AG04450 (cell line): ENCODE measurements at regions of chr3 and their contacts with region 1.

Region 1: DNA sequence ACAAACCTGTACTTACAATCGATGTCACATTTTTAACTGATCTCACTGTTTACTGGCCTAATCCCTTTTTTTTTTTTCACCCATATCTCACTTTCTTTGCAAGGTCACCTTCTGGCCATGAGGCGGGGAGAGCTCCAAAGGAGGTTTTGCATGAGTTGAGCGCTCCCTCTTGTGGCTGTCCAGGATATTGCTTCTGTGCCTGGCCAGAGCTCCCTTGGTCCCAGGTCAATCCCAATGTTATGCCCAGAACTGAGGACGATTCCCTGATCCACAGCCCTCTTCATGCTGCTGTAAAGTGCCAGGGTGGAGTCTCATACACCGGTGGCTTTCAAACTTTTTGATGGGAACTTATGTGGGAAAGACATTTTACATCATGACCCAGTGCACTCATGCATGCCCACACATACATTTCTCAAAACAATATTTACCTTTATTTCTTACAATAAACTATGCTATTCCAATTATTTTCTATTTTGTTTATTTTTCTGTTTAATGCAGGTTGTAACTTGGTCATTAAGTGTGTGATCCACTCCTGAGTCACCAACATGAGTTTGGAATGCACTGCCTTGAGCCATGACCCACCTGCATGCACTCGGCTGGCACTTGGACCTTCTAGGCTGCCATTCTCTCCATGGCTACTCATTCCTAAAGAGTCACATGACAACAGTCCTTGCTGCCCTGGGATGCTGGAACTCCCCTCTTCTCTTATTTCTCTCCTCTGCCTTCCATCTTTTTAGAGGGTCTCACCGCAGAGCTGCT is 9.6 kb upstream of the SST start:
- DNase-seq: peak; percentile 24
- H3K4me3 ChIP-seq: no peak overlapping the region
- H3K27ac ChIP-seq: no peak overlapping the region
- H3K27me3 ChIP-seq: peaks cover 29% of the 10 kb centered on the region
- CTCF ChIP-seq: peak; percentile 98

Region 2: DNA sequence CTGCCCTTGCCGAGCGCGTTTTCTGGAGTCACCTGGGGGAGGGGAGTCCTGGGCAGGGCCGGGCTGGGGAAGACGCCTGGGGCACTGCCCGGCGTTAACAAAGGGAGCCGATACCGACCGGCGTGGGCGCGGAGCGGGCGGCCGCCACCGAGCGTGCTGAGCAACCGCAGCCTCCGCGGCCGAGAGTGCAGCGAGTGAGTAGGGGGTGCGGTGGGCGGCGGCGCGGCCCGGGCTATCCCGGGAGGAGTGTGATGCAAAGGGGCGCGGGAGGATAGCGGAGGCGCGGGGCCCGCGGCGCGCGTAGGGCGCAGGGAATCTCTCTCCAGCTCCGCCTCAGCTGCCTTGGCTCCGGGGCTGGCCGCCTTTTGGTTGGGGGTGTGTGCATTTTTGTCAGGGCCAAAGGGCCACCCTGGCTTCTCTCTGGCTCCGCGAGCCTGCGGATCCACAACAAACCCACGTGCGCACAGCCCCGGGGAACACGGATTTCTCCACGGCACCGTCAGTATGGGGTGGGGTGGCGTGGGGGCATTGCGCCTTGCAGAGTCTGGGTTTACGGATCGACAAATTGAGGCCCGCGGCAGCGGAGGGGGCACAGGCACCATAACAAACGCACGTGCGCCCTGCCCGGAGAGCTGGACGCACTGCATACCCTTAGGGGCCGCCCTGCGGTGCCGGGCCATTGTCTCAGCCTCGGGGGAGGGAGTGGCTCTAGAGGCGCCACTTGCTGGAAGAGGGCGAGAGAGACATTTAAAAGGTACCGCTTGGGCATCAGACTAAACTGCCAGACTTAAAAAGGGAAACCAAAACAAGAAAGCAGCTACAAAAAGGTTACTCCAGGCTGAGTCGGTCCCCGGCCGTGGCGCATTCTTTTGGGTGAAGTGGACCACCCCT is 748.9 kb before region 1 on chr3:
- CTCF ChIA-PET with region 1: no interaction called
- POLR2A ChIA-PET with region 1: no interaction called
- DNase-seq: no peak
- H3K4me3 ChIP-seq: peak overlapping the region; percentile 77
- H3K27ac ChIP-seq: peak overlapping the region; percentile 39
- H3K27me3 ChIP-seq: peaks cover 2% of the 10 kb centered on the region
- CTCF ChIP-seq: peak; percentile 14; the same call in 1 of the 2 replicates

Region 3: DNA sequence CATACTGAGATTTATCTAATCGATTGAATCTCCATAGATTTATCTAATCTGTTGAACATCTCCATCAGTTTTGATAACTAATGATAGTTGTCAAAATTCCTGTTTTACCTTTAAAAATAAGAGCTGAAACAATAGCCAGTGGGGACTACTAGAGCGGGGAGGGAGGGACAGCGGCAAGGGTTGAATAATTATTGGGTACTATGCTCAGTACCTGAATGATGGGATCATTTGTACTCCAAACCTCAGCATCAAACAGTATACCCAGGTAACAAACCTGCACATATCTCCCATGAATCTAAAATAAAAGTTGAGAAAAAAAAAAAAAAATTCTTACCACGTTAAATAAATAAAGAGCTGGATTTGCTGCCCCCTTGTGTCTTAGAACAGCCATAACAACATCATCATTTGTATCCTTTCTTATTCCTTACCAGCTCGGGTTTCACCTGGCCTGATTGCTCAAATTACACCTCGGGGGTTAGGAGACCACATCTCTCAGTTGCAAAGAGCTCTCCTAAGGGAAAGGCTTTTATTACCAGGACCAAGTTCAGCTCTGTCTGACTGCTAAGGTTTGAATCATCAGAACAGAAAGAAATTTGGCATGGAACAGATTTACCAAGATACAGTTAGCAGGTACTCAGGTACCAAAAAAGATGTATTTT is 514.8 kb before region 1 on chr3:
- CTCF ChIA-PET with region 1: interaction called, 26 read pairs
- POLR2A ChIA-PET with region 1: no interaction called
- DNase-seq: no peak
- H3K4me3 ChIP-seq: no peak overlapping the region
- H3K27ac ChIP-seq: no peak overlapping the region
- H3K27me3 ChIP-seq: peaks cover 20% of the 10 kb centered on the region
- CTCF ChIP-seq: peak; percentile 67

Region 4: DNA sequence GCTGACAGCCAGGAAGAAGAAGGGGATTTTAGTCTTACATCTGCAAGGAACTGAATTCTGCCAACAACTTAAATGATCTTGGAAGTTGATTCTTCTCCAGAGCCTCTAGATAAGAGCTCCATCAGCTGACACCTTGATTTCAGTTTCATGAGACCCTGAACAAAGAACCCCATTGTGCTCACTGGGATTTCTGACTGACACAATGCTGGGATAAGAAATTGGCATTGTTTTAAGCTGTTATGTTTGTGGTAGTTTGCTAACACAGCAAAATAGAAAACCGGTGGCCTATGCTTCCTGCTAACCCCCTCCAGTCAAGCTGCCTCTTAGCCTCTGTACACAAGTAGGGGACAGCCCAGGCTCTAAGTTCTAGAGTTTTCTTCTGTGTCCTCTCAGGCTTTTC is 424.5 kb before region 1 on chr3:
- CTCF ChIA-PET with region 1: interaction called, 19 read pairs
- POLR2A ChIA-PET with region 1: no interaction called
- DNase-seq: no peak
- H3K4me3 ChIP-seq: no peak overlapping the region
- H3K27ac ChIP-seq: no peak overlapping the region
- H3K27me3 ChIP-seq: no peaks in the 10 kb centered on the region
- CTCF ChIP-seq: no peak

Region 5: DNA sequence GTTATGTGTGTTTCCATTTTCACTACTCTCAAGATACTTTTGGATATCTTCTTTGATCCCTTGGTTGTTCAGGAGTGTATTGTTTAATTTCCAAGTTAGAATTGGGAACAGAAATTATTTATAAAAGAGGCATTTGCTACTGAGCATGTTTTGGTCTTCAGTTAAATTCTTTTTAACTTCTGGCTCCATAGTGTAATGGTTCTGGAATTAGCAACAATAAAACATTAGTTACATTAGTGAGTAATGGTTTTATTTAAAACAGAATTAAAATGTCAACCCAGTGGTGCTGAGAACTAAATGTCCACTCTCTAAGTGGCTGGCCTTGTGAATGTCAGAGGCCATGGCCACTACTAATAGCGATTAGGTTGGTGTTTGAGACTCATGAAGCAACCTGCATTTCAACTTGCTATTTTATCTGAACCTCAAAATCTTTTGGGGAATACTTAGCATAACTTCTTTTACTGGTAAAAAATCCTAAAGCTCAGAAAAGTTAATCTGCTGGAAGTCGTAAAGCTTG is 368.8 kb before region 1 on chr3:
- CTCF ChIA-PET with region 1: interaction called, 696 read pairs
- POLR2A ChIA-PET with region 1: no interaction called
- DNase-seq: no peak
- H3K4me3 ChIP-seq: no peak overlapping the region
- H3K27ac ChIP-seq: no peak overlapping the region
- H3K27me3 ChIP-seq: peaks cover 7% of the 10 kb centered on the region
- CTCF ChIP-seq: no peak

Region 6: GRCh38 chr3:187616307-187616972 is 63.4 kb before region 1 on chr3:
- CTCF ChIA-PET with region 1: interaction called, 119 read pairs
- POLR2A ChIA-PET with region 1: no interaction called
- DNase-seq: peak; percentile 20
- H3K4me3 ChIP-seq: no peak overlapping the region
- H3K27ac ChIP-seq: no peak overlapping the region
- H3K27me3 ChIP-seq: peaks cover 13% of the 10 kb centered on the region
- CTCF ChIP-seq: peak; percentile 73

Region 7: GRCh38 chr3:187705164-187705563 is 25.3 kb after region 1 on chr3:
- CTCF ChIA-PET with region 1: interaction called, 39 read pairs
- POLR2A ChIA-PET with region 1: no interaction called
- DNase-seq: no peak
- H3K4me3 ChIP-seq: no peak overlapping the region
- H3K27ac ChIP-seq: no peak overlapping the region
- H3K27me3 ChIP-seq: peaks cover 2% of the 10 kb centered on the region
- CTCF ChIP-seq: no peak

Region 8: GRCh38 chr3:187788984-187789857 is 109.4 kb after region 1 on chr3:
- CTCF ChIA-PET with region 1: no interaction called
- POLR2A ChIA-PET with region 1: no interaction called
- DNase-seq: no peak
- H3K4me3 ChIP-seq: no peak overlapping the region
- H3K27ac ChIP-seq: no peak overlapping the region
- H3K27me3 ChIP-seq: peaks cover 6% of the 10 kb centered on the region
- CTCF ChIP-seq: no peak